CD8-positive, alpha-beta T cell (primary cell): ENCODE measurements at regions of chr22 and their contacts with region 1.

Region 1: GRCh38 chr22:37166675-37167066 is 17.0 kb upstream of the IL2RB start:
- DNase-seq: peak; percentile 73 to 92 (median 86)
- ATAC-seq: peak; percentile 43
- H3K4me3 ChIP-seq: peak overlapping the region; percentile 42 to 60
- H3K4me3 Mint-ChIP-seq: peak overlapping the region; percentile 91
- H3K27ac ChIP-seq: peak overlapping the region; percentile 49 to 75
- H3K27ac Mint-ChIP-seq: peak overlapping the region; percentile 94
- H3K4me1 ChIP-seq: peaks cover 88% of the 10 kb centered on the region
- H3K4me1 Mint-ChIP-seq: peaks cover 96% of the 10 kb centered on the region
- H3K27me3 ChIP-seq: no peaks in the 10 kb centered on the region
- H3K27me3 Mint-ChIP-seq: no peaks in the 10 kb centered on the region
- CTCF ChIP-seq: peak; percentile 91

Region 2: DNA sequence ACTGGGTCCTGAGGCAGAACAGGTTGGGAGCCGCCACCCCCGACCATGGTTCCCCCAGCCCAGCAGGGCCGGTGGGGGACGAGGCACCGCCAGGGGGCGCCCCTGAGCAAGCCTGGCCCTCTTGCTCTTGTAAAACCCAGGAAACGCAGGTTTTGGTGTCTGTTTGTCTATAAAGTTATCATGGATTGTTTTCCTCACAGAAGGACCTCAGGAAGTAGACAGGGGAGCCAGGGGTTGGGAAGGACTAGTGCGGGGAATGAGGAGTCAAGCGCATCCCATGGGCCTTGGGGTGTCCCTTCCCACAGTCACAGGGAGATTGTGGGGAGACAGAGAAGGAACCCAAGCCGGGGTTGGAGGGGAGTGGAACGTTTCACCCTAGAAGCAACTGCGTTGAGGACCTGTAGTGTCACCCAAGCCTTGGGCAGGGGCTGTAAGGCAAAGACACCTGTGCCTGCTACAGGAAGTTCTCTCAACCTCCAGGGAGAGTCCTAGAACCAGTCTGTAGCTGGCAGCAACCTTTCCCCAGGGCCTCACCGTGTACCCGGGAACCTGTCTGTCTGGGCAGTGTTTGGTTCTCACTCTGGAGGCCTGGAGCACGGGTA is 88.7 kb before region 1 on chr22:
- CTCF ChIA-PET with region 1: interaction called, 7 read pairs
- POLR2A ChIA-PET with region 1: no interaction called
- intact Hi-C with region 1: loop called (anchors 1 kb)
- DNase-seq: peak; percentile 68 to 93 (median 83)
- ATAC-seq: peak; percentile 14
- H3K4me3 ChIP-seq: no peak overlapping the region
- H3K4me3 Mint-ChIP-seq: peak overlapping the region; percentile 47
- H3K27ac ChIP-seq: peak overlapping the region in 1 of 2 experiments; percentile 51
- H3K27ac Mint-ChIP-seq: peak overlapping the region; percentile 99
- H3K4me1 ChIP-seq: peaks cover 39% of the 10 kb centered on the region
- H3K4me1 Mint-ChIP-seq: peaks cover 31% of the 10 kb centered on the region
- H3K27me3 ChIP-seq: no peaks in the 10 kb centered on the region
- H3K27me3 Mint-ChIP-seq: peaks cover 3% of the 10 kb centered on the region
- CTCF ChIP-seq: peak; percentile 98

Region 3: DNA sequence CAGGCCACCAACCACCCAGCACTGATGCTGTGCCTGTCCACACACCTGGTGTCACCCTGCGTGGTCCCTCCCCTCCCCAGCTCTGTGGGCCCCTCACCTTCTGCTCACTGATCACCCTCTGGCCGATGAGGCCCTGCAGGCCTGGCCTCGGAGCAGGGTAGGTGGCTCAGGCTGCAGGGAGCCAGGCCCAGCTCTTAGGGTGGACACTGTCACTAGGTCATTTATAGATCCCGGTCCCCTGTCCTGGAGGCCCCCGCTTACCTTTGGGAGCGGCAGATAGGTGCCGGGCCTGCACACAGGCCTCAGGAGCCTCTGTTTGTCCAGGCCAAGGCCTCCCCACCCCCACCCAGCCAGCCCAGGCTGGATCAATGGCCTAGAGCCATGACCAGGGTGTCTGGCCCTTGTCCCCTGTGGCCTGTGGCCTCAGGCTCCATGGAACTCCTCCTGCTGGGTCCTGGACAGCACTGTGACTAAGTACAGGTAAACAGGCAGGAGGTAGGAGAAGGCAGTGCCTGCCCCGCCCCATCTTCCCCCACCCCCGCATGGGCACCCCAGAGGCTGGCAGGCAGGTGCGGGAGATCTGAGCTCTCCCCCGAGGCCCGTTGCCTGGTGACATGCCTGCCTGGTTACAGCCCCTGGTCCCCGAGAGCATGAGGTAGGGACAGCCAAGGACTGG is 57.3 kb before region 1 on chr22 and contains the start of gene TMPRSS6:
- CTCF ChIA-PET with region 1: no interaction called
- POLR2A ChIA-PET with region 1: no interaction called
- intact Hi-C with region 1: no loop called
- DNase-seq: no peak
- ATAC-seq: no peak
- H3K4me3 ChIP-seq: no peak within 1 kb of the TSS
- H3K4me3 Mint-ChIP-seq: no peak within 1 kb of the TSS
- H3K27ac ChIP-seq: no peak within 1 kb of the TSS
- H3K27ac Mint-ChIP-seq: no peak within 1 kb of the TSS
- H3K4me1 ChIP-seq: no peaks in the 10 kb centered on the region
- H3K4me1 Mint-ChIP-seq: no peaks in the 10 kb centered on the region
- H3K27me3 ChIP-seq: no peaks in the 10 kb centered on the region
- H3K27me3 Mint-ChIP-seq: no peaks in the 10 kb centered on the region
- CTCF ChIP-seq: no peak
- total RNA-seq, gene TMPRSS6: 0.27 to 0.58 TPM

Region 4: GRCh38 chr22:37148742-37149665 is 17.7 kb before region 1 on chr22:
- CTCF ChIA-PET with region 1: interaction called, 86 read pairs
- POLR2A ChIA-PET with region 1: interaction called, 40 read pairs
- intact Hi-C with region 1: loop called (anchors 1 kb)
- DNase-seq: peak in 1 of 9 experiments; percentile 36
- ATAC-seq: no peak
- H3K4me3 ChIP-seq: peak overlapping the region; percentile 91 to 98
- H3K4me3 Mint-ChIP-seq: peak overlapping the region; percentile 96
- H3K27ac ChIP-seq: peak overlapping the region; percentile 84 to 94
- H3K27ac Mint-ChIP-seq: peak overlapping the region; percentile 96
- H3K4me1 ChIP-seq: peaks cover 60% of the 10 kb centered on the region
- H3K4me1 Mint-ChIP-seq: peaks cover 61% of the 10 kb centered on the region
- H3K27me3 ChIP-seq: no peaks in the 10 kb centered on the region
- H3K27me3 Mint-ChIP-seq: no peaks in the 10 kb centered on the region
- CTCF ChIP-seq: no peak

Region 5: DNA sequence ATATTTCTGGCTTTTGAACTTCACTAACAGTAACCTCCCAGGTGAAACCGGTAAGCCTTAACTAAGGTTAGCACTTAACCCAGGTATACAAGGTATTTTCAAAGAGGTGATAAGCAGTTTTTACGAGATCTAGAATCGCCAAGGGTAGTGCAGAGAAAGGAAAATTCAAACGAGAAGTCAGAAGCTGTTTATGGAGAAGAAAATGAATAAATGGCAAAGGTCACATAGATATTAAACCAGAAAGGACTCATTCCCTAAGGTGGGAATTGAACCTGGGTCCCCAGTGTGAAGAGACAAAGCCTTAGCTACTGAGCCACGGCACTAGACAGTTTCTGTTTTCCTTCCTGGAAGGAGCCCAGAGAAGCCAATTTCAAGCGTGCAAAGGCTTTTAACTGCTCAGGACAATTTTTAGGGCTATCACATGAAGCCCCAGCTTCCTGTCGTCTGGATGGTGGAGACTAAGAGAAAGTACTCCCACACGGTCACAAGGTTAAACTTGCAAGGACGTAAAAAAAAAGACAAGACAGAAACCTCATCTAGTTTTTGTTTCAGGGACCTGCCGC is 27.0 kb after region 1 on chr22:
- CTCF ChIA-PET with region 1: interaction called, 41 read pairs
- POLR2A ChIA-PET with region 1: interaction called, 10 read pairs
- intact Hi-C with region 1: loop called (anchors 1 kb)
- DNase-seq: peak in 5 of 9 experiments; percentile 30 to 85 (median 50)
- ATAC-seq: peak; percentile 56
- H3K4me3 ChIP-seq: peak overlapping the region in 1 of 2 experiments; percentile 5
- H3K4me3 Mint-ChIP-seq: peak overlapping the region; percentile 65
- H3K27ac ChIP-seq: peak overlapping the region; percentile 10 to 73
- H3K27ac Mint-ChIP-seq: peak overlapping the region; percentile 83
- H3K4me1 ChIP-seq: peaks cover 49% of the 10 kb centered on the region
- H3K4me1 Mint-ChIP-seq: peaks cover 65% of the 10 kb centered on the region
- H3K27me3 ChIP-seq: no peaks in the 10 kb centered on the region
- H3K27me3 Mint-ChIP-seq: no peaks in the 10 kb centered on the region
- CTCF ChIP-seq: no peak

Region 6: DNA sequence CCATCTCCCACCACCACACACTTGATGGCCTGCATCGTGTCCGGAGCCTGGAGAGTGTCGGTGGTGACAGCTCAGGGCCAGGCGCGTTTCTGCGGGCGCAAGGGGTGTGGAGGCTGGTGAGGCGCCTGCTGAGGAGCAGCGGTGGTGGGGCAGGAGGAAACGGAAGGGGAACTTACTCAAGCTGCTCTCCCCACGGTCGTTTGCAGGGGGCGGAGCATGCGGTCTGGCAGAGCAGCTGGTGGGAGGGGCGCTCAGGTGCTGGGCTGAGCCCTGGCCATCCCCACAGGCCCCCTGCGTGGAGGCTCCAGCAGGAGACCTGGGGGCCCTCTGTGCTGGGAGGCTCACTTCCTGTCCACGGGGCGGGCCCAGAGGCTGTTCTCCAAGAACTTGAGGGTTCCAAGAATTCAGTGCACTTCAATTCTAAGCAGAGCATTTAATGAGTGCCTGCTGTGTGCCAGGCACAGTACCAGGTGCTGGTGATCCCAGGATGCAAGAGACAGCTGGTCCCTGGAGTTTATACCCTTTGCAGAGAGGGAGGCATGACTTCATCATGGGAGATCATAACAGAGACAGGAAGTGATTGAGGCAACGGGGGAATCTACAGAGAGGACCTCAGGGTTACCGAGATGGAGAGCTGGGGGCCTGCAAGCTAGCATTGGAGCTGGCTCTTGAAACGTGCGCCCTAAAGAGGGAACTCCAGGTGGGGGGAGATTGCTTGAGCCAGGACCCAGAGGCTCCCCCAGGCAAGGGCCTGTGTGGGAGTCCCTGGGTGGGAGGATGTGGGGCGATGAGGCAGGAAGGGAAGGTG is 77.6 kb after region 1 on chr22 and contains the start of gene RAC2:
- CTCF ChIA-PET with region 1: interaction called, 7 read pairs
- POLR2A ChIA-PET with region 1: interaction called, 7 read pairs
- intact Hi-C with region 1: loop called in 1 of 2 experiments (anchors 1 kb)
- DNase-seq: peak; percentile 71 to 95 (median 90)
- ATAC-seq: peak; percentile 54
- H3K4me3 ChIP-seq: peak within 1 kb of the TSS; percentile 79 to 98
- H3K4me3 Mint-ChIP-seq: peak within 1 kb of the TSS; percentile 98
- H3K27ac ChIP-seq: peak within 1 kb of the TSS; percentile 81
- H3K27ac Mint-ChIP-seq: peak within 1 kb of the TSS; percentile 100
- H3K4me1 ChIP-seq: peaks cover 45% of the 10 kb centered on the region
- H3K4me1 Mint-ChIP-seq: peaks cover 55% of the 10 kb centered on the region
- H3K27me3 ChIP-seq: no peaks in the 10 kb centered on the region
- H3K27me3 Mint-ChIP-seq: no peaks in the 10 kb centered on the region
- CTCF ChIP-seq: no peak
- total RNA-seq, gene RAC2: 152 to 159 TPM

Region 7: GRCh38 chr22:37428649-37429586 is 262.2 kb after region 1 on chr22:
- CTCF ChIA-PET with region 1: no interaction called
- POLR2A ChIA-PET with region 1: no interaction called
- intact Hi-C with region 1: no loop called
- DNase-seq: peak; percentile 30 to 80 (median 65)
- ATAC-seq: peak; percentile 62
- H3K4me3 ChIP-seq: no peak overlapping the region
- H3K4me3 Mint-ChIP-seq: peak overlapping the region; percentile 22
- H3K27ac ChIP-seq: no peak overlapping the region
- H3K27ac Mint-ChIP-seq: no peak overlapping the region
- H3K4me1 ChIP-seq: peaks cover 17% of the 10 kb centered on the region
- H3K4me1 Mint-ChIP-seq: peaks cover 22% of the 10 kb centered on the region
- H3K27me3 ChIP-seq: peaks cover 17 to 25% of the 10 kb centered on the region in 2 experiments
- H3K27me3 Mint-ChIP-seq: peaks cover 54% of the 10 kb centered on the region
- CTCF ChIP-seq: peak; percentile 54

Region 8: GRCh38 chr22:37442537-37442936 is 275.9 kb after region 1 on chr22:
- CTCF ChIA-PET with region 1: no interaction called
- POLR2A ChIA-PET with region 1: no interaction called
- intact Hi-C with region 1: no loop called
- DNase-seq: no peak
- ATAC-seq: no peak
- H3K4me3 ChIP-seq: no peak overlapping the region
- H3K4me3 Mint-ChIP-seq: no peak overlapping the region
- H3K27ac ChIP-seq: no peak overlapping the region
- H3K27ac Mint-ChIP-seq: no peak overlapping the region
- H3K4me1 ChIP-seq: no peaks in the 10 kb centered on the region
- H3K4me1 Mint-ChIP-seq: no peaks in the 10 kb centered on the region
- H3K27me3 ChIP-seq: no peaks in the 10 kb centered on the region
- H3K27me3 Mint-ChIP-seq: no peaks in the 10 kb centered on the region
- CTCF ChIP-seq: no peak